Activated T-helper 2 cell treated with anti-CD3 and anti-CD28 coated beads, Interferon-gamma antibody, Interleukin-2, Interleukin-4, amounts not matched to agents 10 μg/mL and 5 μg/mL and 100 μg/mL, durations not matched to agents 14 hours and 24 hours and 36 hours (primary cell): ENCODE measurements at regions of chr1 and their contacts with region 1.

Region 1: GRCh38 chr1:39609618-39610331 is 29.7 kb downstream of the HEYL start:
- DNase-seq: peak; percentile 75
- H3K4me3 Mint-ChIP-seq: no peak overlapping the region
- H3K27ac Mint-ChIP-seq: no peak overlapping the region
- H3K4me1 Mint-ChIP-seq: peaks cover 7% of the 10 kb centered on the region
- H3K27me3 Mint-ChIP-seq: no peaks in the 10 kb centered on the region

Region 2: DNA sequence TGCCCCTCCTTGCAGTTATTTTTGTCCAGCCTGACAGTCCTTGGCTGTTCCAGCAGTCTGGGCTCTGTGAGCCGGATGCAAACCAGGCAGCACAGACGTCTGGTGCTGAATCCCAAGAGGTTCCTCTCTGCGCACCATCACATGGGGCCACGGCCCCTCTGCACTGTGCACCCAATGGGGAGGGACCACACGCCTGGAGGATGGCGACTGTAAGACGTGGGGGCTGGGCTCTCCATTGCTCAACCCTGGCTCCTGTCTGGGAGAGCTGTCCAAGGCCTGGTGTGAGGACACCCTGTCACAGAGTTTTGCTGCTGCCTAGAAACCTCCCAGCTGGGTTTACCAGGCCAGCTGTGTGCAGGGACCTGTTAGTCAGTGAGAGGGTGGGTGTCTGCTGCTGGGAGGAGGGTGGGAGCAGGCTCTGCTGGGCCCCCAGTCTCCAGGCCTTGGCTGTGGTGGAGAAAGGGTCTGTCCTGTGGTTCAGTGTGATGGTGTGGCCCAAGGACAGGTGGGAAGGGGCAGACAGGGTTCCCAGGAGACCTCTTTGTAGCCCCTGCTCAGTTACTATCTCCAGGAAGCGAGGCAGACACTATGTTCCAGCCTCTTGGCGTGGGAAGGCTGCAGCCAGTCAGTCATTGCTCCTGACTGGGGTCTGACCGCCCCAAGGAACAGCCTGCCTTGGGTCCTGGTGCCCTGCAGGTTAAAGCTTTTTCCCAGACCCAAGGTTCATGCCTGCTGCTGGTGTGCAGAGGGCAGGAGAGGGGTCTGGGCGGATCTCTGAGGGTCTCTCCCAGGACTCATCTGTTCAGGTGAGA is 15.9 kb after region 1 on chr1:
- intact Hi-C with region 1: no loop called
- DNase-seq: no peak
- H3K4me3 Mint-ChIP-seq: no peak overlapping the region
- H3K27ac Mint-ChIP-seq: no peak overlapping the region
- H3K4me1 Mint-ChIP-seq: peaks cover 13% of the 10 kb centered on the region
- H3K27me3 Mint-ChIP-seq: no peaks in the 10 kb centered on the region

Region 3: GRCh38 chr1:39653546-39654031 is 43.8 kb after region 1 on chr1:
- intact Hi-C with region 1: loop called (anchors 1 kb)
- DNase-seq: peak; percentile 60
- H3K4me3 Mint-ChIP-seq: no peak overlapping the region
- H3K27ac Mint-ChIP-seq: no peak overlapping the region
- H3K4me1 Mint-ChIP-seq: peaks cover 20% of the 10 kb centered on the region
- H3K27me3 Mint-ChIP-seq: no peaks in the 10 kb centered on the region

Region 4: GRCh38 chr1:39720094-39720999 is 110.6 kb after region 1 on chr1:
- intact Hi-C with region 1: loop called (anchors 2 kb)
- DNase-seq: no peak
- H3K4me3 Mint-ChIP-seq: no peak overlapping the region
- H3K27ac Mint-ChIP-seq: no peak overlapping the region
- H3K4me1 Mint-ChIP-seq: no peaks in the 10 kb centered on the region
- H3K27me3 Mint-ChIP-seq: peaks cover 50% of the 10 kb centered on the region

Region 5: DNA sequence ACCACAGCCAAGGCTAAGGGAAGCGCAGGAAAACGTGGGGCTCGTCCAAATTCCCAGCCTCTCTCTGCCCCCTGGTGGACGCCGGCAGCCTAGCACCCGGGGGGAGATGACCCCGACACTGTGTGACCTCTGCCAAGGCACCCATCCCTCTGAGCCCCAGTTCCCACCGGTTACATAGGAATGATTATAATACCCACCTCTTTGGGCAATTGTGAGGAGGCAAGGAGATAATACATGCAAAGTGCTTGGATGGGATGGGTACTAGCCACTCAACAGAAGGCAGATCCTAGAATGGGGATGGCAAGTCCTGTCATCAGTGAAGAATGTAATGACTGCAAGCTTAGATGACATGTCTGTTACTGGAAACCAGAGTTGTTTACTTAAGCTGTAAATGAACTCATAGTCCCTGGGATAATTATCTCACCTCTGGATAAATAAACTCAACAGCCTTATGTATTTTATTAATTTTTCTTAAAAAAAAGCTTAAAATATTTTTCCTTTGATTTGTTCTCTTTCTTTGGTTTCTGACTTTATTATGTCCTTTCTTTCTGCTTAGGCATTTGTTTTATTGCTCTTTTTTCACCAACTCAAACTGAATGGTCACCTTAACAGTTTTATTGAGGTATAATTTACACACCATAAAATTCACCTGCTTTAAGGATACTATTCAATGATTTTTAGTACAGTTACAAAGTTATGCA is 190.1 kb after region 1 on chr1:
- intact Hi-C with region 1: loop called (anchors 10 kb)
- DNase-seq: peak; percentile 48
- H3K4me3 Mint-ChIP-seq: peak overlapping the region; percentile 55
- H3K27ac Mint-ChIP-seq: peak overlapping the region; percentile 72
- H3K4me1 Mint-ChIP-seq: peaks cover 10% of the 10 kb centered on the region
- H3K27me3 Mint-ChIP-seq: no peaks in the 10 kb centered on the region